Activated CD4-positive, alpha-beta T cell treated with anti-CD3 and anti-CD28 coated beads, Interleukin-2, amount 10 ng/mL, durations not matched to agents 24 days and 14 days (primary cell): ENCODE measurements at regions of chr18 and their contacts with region 1.

Region 1: DNA sequence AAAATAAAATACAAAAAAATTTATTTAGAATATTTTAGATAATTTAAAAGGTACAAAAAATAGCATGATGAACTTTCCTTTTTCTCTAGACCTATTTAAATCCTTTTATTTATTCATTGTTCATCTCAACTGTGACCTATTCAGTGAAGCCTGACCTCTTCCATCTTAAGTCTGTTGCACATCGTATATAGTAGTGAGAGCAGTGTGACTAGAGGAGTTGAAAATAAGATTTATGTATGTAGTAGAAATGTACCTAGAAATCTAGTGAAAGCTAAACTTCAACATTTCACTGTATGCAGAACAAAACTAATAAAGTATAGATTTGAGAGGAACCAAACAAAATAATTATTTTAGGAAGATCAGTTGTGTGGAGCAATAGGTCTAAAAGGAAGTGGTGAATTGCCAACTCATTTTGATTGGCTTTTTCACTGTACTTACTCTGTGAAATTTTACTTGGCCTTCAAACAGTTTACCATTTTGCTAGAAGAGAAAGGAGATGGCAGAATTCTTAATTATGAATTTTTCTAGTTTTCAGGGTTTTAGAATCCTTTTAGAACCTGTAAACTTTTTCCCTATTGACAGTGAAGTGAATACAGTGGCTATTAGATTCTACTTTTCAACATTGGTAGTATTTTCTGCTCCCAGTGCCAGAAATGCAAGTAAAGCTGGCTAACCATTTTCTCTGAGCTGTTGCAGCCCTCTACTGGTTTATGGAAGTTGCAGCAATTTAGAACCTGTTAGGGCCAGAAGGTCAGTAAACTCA is 11.0 kb downstream of the ANKRD12 start:
- DNase-seq: peak; percentile 83
- H3K4me3 Mint-ChIP-seq: peak overlapping the region; percentile 66
- H3K27ac Mint-ChIP-seq: peak overlapping the region; percentile 78
- H3K4me1 Mint-ChIP-seq: peaks cover 50% of the 10 kb centered on the region
- H3K27me3 Mint-ChIP-seq: no peaks in the 10 kb centered on the region

Region 2: GRCh38 chr18:8696749-8697211 is 450.8 kb before region 1 on chr18:
- intact Hi-C with region 1: loop called (anchors 5 kb)
- DNase-seq: peak; percentile 93
- H3K4me3 Mint-ChIP-seq: no peak overlapping the region
- H3K27ac Mint-ChIP-seq: no peak overlapping the region
- H3K4me1 Mint-ChIP-seq: no peaks in the 10 kb centered on the region
- H3K27me3 Mint-ChIP-seq: peaks cover 24% of the 10 kb centered on the region

Region 3: DNA sequence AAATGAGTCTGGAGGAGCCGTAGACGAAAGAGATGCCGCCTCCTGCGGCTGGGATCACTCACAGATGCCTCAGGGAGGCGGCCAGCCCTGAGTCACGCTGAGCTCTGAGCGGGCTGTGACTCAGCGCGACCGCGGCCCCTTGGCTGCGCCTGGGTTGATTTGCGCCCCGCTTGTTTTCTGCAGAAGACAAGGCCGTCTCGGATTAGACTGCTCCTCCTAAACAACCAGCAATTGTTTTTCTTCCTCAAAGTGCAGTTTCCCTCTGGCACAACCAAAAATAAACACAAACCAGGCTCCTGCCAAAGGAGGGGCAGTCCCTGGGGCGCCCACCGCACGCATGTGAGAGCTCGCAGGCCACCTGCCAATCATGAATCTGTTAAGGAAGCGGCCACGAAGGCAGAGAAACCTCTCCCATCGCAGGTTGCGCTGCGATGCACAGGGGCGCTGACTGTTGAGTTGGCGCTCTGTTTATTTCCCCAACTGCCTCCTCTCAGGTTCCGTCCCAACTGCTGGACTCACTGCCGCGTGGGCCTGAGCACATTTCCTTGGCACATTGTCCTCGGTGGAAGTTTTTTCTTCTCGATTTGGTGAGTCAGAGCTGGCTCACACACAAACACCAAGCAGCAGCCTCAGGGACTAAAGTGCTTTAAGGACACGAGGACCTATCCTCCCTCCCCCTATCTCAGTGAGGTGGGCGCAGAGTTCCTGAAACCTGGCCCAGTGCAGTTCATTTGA is 130.3 kb before region 1 on chr18:
- intact Hi-C with region 1: loop called (anchors 5 kb)
- DNase-seq: peak; percentile 88
- H3K4me3 Mint-ChIP-seq: peak overlapping the region; percentile 78
- H3K27ac Mint-ChIP-seq: peak overlapping the region; percentile 86
- H3K4me1 Mint-ChIP-seq: peaks cover 11% of the 10 kb centered on the region
- H3K27me3 Mint-ChIP-seq: no peaks in the 10 kb centered on the region

Region 4: DNA sequence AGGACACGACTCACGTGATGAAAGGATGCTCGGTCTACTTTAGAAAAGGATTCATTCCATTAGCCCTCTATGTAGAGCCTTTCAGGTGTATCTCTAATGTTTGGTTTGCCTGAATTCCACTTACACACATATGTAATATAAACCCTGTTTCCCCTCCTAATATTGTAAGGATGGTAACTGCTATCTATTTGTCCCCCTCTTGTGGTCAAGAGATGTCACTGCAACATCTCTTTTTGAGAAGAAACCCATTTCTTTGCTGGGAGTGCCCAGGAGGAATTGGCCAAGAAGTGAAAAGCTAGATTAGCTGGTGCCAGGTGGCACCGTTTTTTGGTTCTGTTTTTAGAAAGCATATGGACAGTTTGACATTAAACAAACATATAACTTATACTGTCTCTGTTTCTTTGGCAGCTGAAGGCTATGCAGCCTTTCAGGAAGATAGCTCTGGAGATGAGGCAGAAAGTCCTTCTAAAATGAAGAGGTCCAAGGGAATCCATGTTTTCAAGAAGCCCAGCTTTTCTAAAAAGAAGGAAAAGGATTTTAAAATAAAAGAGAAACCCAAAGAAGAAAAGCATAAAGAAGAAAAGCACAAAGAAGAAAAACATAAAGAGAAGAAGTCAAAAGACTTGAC is 368.9 kb after region 1 on chr18:
- intact Hi-C with region 1: loop called (anchors 5 kb)
- DNase-seq: peak; percentile 73
- H3K4me3 Mint-ChIP-seq: no peak overlapping the region
- H3K27ac Mint-ChIP-seq: no peak overlapping the region
- H3K4me1 Mint-ChIP-seq: peaks cover 2% of the 10 kb centered on the region
- H3K27me3 Mint-ChIP-seq: no peaks in the 10 kb centered on the region

Region 5: GRCh38 chr18:9535382-9535991 is 387.9 kb after region 1 on chr18:
- intact Hi-C with region 1: no loop called
- DNase-seq: no peak
- H3K4me3 Mint-ChIP-seq: no peak overlapping the region
- H3K27ac Mint-ChIP-seq: no peak overlapping the region
- H3K4me1 Mint-ChIP-seq: peaks cover 2% of the 10 kb centered on the region
- H3K27me3 Mint-ChIP-seq: no peaks in the 10 kb centered on the region

Region 6: DNA sequence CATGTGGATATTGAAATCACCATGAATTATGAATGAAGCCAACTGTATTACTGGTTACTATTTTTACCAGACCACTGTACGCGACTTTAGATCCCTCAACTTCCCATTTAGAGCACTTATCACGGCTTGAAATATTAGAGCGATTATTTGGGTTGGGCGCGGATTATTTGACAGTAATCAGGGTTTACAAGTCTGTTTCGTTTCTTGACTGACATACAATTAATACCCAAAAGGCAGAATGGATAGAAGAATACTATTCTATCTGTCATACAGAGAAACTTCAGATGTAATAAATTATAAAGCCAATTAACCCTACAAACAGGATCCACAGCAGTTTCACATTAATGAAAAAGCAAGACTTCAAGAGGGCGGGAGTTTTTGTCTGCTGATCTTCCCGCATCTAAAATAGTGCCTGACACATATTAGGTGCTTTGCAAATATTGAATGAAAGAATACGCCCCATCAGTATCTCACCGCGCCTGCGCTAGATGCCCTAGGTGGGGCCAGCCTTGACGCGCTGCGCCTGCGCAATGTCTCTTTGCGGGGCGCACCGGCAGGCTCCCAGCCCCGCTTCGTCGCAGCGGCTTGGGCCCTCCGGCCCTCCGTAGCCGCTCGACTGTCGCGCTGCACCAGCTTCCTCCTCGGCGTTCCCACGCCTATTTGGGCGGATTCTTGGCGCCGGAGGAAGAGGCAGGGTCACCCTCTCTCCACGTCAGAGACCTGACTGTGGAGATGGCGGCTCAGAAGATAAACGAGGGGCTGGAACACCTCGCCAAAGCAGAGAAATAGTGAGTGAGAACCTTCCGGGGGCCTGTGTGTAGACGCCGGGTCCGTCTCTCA is 1378.0 kb after region 1 on chr18 and contains the start of gene NAPG:
- intact Hi-C with region 1: loop called (anchors 10 kb)
- DNase-seq: peak; percentile 98
- H3K4me3 Mint-ChIP-seq: peak within 1 kb of the TSS; percentile 96
- H3K27ac Mint-ChIP-seq: peak within 1 kb of the TSS; percentile 98
- H3K4me1 Mint-ChIP-seq: peaks cover 41% of the 10 kb centered on the region
- H3K27me3 Mint-ChIP-seq: peaks cover 8% of the 10 kb centered on the region
- total RNA-seq, gene NAPG: 36.4 and 38.7 TPM in 2 replicates